CD8-positive, alpha-beta memory T cell (primary cell): ENCODE measurements at regions of chr18 and their contacts with region 1.

Region 1: DNA sequence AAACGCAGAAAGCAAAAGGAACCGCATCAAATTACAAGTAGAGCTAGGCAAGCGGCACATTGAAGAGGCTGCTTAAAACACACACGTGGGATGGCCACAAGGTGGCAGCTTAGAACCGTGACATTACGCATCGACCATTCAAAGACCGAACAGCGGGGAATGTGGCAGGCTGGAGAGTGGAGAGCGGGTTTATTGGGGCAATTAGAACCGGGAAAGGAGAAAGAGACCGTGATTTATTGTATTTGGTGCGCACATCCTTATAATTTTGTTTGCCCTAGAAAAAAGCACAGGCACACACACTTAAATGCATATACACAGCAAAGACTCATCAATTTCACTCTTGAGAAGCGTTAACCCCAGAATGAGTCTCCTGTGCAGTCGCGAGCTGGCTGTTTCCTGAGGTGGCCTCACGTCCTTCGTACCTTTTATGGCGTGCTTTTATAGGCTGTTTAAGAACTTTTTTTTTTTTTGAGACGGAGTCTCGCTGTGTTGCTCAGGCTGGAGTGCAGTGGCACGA is 31.7 kb upstream of the MEP1B start:
- DNase-seq: peak; percentile 50 to 77 (median 61)
- H3K4me3 ChIP-seq: peak overlapping the region; percentile 41
- H3K4me3 Mint-ChIP-seq: peak overlapping the region; percentile 4 to 88 (median 75)
- H3K27ac ChIP-seq: no peak overlapping the region
- H3K27ac Mint-ChIP-seq: peak overlapping the region in 1 of 8 donors; percentile 13
- H3K4me1 ChIP-seq: no peaks in the 10 kb centered on the region
- H3K4me1 Mint-ChIP-seq: peaks cover 7 to 12% (median 9%) of the 10 kb centered on the region in 3 donors
- H3K27me3 ChIP-seq: no peaks in the 10 kb centered on the region
- H3K27me3 Mint-ChIP-seq: peaks cover 0 to 18% of the 10 kb centered on the region in 2 donors

Region 2: DNA sequence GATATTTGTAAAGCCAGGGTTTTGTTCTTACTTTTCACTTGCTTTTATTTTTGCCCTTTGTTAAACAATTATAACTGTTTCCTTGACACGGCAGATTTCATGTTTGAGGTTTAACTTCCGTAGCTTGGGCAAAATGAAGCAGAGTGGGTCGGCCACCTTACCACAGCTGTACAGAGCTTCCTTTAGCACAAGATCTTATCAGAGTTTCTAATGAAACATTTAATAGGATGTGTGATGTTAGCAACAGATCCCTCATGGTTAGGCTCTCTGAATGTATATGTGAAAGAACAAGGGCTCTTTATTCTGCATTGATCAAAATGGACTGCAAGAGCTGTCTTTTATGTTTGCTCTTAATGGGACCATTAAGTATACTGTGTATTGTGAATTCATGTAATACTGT is 117.2 kb before region 1 on chr18:
- CTCF ChIA-PET with region 1: no interaction called
- POLR2A ChIA-PET with region 1: no interaction called
- DNase-seq: peak; percentile 24 to 76 (median 45)
- H3K4me3 ChIP-seq: peak overlapping the region; percentile 39
- H3K4me3 Mint-ChIP-seq: peak overlapping the region; percentile 25 to 86 (median 70)
- H3K27ac ChIP-seq: no peak overlapping the region
- H3K27ac Mint-ChIP-seq: peak overlapping the region; percentile 17 to 93 (median 76)
- H3K4me1 ChIP-seq: peaks cover 65% of the 10 kb centered on the region
- H3K4me1 Mint-ChIP-seq: peaks cover 59 to 76% (median 72%) of the 10 kb centered on the region in 3 donors
- H3K27me3 ChIP-seq: no peaks in the 10 kb centered on the region
- H3K27me3 Mint-ChIP-seq: peaks cover 0 to 1% of the 10 kb centered on the region in 2 donors

Region 3: DNA sequence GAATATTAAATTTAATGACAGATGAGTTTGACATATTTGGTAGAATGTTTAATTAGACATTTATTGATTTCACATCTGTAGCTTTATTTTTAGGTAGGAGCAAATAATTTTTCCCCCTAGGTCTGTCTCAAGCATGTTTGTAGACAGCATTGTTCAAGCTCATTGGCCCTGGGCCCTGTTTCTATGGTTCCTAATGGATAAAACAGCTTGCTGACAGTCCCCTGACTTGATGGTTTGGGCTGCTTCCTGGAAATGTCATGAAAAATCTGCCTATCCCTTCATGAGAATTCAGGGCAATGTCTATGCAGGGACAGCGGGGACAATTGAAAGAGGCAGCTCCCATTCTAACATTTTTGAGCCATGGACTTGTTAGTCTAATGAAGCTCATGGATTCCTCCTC is 17.1 kb after region 1 on chr18:
- CTCF ChIA-PET with region 1: interaction called, 13 read pairs
- POLR2A ChIA-PET with region 1: no interaction called
- DNase-seq: no peak
- H3K4me3 ChIP-seq: no peak overlapping the region
- H3K4me3 Mint-ChIP-seq: no peak overlapping the region
- H3K27ac ChIP-seq: no peak overlapping the region
- H3K27ac Mint-ChIP-seq: no peak overlapping the region
- H3K4me1 ChIP-seq: no peaks in the 10 kb centered on the region
- H3K4me1 Mint-ChIP-seq: no peaks in the 10 kb centered on the region
- H3K27me3 ChIP-seq: no peaks in the 10 kb centered on the region
- H3K27me3 Mint-ChIP-seq: peaks cover 0 to 5% of the 10 kb centered on the region in 2 donors

Region 4: GRCh38 chr18:32552421-32553030 is 394.4 kb after region 1 on chr18:
- CTCF ChIA-PET with region 1: interaction called, 88 read pairs
- POLR2A ChIA-PET with region 1: no interaction called
- DNase-seq: peak; percentile 10 to 63 (median 32)
- H3K4me3 ChIP-seq: no peak overlapping the region
- H3K4me3 Mint-ChIP-seq: no peak overlapping the region
- H3K27ac ChIP-seq: no peak overlapping the region
- H3K27ac Mint-ChIP-seq: peak overlapping the region in 1 of 8 donors; percentile 43
- H3K4me1 ChIP-seq: no peaks in the 10 kb centered on the region
- H3K4me1 Mint-ChIP-seq: peaks cover 2 to 4% (median 3%) of the 10 kb centered on the region in 3 donors
- H3K27me3 ChIP-seq: no peaks in the 10 kb centered on the region
- H3K27me3 Mint-ChIP-seq: peaks cover 5 to 7% of the 10 kb centered on the region in 2 donors